ENCODE measurements at regions of chr13 and their contacts with region 1.

Region 1: GRCh38 chr13:104773775-104774174 is 1707.6 kb upstream of the SLC10A2 start:
- DNase-seq: peak; percentile 9
- H3K4me3 ChIP-seq: no peak overlapping the region
- CTCF ChIP-seq: peak; percentile 54

Region 2: GRCh38 chr13:104357174-104357573 is 416.6 kb before region 1 on chr13:
- CTCF ChIA-PET with region 1: no interaction called
- POLR2A ChIA-PET with region 1: no interaction called
- DNase-seq: no peak
- H3K4me3 ChIP-seq: no peak overlapping the region
- CTCF ChIP-seq: no peak

Region 3: DNA sequence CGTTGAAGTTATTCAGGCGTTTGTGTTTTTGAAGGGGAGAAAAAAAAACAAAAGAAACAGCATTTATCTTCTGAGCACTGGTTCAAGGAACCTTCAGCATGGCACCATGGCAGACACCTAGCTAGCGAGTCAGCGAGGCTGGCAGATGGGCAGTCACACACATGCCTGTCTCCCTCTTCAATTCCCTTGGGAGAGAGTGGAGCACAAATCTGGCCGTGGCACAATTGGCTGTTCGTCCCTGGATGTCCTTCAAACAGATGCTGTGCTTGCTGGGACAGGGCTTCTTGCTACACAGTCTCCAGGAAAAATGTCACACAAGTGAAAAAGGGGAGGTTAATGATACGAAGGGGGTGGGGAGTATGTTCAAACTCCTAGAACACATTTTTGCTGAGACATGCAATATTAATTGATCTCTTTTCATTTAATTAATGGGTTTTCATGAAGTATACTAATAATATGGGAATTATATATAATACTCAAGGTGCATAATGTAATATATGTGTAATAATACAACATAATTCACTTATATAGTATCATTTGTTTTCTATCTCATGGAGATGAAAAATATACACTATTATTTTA is 33.0 kb before region 1 on chr13:
- CTCF ChIA-PET with region 1: no interaction called
- POLR2A ChIA-PET with region 1: no interaction called
- DNase-seq: no peak
- H3K4me3 ChIP-seq: no peak overlapping the region
- CTCF ChIP-seq: no peak

Region 4: GRCh38 chr13:104757712-104758111 is 16.1 kb before region 1 on chr13:
- CTCF ChIA-PET with region 1: interaction called, 17 read pairs
- POLR2A ChIA-PET with region 1: no interaction called
- DNase-seq: no peak
- H3K4me3 ChIP-seq: no peak overlapping the region
- CTCF ChIP-seq: no peak

Region 5: DNA sequence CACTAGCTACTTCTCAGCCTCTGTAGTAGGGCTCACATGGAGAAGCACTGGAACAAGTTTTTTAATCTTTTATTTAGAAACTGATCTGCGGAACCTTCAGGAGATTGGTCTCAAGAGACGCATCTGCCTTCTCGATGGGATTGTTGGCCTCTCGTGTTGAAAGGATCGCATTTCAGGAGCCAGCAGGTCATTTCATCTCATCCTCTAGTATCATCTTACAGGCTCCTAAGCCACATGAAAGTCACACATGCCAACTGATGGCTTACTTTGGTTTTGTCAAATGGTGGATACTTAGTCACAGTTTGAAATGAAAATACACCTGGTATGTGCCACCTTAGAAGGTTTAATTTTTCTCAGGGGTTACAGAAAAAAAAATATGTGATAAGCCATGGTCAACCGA is 58.1 kb after region 1 on chr13:
- CTCF ChIA-PET with region 1: no interaction called
- POLR2A ChIA-PET with region 1: no interaction called
- DNase-seq: no peak
- H3K4me3 ChIP-seq: no peak overlapping the region
- CTCF ChIP-seq: no peak

Region 6: DNA sequence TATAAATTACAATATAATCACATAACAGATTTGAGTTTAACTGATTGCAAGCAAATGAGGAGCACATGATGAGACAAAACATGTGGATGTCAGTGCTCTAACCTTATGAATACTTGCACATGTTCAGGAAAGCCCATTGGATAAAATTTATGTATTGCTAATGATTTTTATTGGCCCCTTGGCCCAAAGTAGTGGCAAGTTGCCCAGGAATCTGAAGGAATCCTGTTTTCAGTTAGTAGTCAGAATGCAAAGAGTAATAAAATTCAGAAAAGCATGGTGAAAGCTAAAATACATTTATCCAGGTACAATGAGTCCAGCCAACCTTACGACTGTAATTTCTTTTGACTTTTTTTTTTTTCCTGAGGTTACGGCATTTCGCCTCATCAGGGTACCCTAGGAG is 222.2 kb after region 1 on chr13:
- CTCF ChIA-PET with region 1: no interaction called
- POLR2A ChIA-PET with region 1: no interaction called
- DNase-seq: no peak
- H3K4me3 ChIP-seq: no peak overlapping the region
- CTCF ChIP-seq: no peak